SK-MEL-5 (cell line): ENCODE measurements at regions of chr2 and their contacts with region 1.

Region 1: DNA sequence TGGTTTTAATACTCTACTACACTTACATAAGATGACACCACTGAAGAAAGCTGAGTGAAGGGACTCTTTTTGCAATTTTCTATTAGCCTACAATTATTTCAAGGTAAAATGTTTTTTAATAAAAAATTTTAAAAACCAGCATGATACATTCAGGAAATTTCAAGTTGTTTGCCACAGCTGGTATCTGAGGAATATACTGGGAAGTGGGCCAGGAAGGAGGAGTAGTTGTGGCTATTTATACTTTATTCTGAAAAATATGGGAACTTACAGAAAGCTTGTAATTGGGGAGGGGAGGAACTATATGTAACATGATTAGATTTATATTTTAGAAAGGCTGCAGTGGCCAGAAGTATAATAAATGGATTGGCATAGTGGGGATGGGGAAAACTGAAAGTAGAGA is 40.8 kb downstream of the WDR35 start:
- DNase-seq: no peak

Region 2: DNA sequence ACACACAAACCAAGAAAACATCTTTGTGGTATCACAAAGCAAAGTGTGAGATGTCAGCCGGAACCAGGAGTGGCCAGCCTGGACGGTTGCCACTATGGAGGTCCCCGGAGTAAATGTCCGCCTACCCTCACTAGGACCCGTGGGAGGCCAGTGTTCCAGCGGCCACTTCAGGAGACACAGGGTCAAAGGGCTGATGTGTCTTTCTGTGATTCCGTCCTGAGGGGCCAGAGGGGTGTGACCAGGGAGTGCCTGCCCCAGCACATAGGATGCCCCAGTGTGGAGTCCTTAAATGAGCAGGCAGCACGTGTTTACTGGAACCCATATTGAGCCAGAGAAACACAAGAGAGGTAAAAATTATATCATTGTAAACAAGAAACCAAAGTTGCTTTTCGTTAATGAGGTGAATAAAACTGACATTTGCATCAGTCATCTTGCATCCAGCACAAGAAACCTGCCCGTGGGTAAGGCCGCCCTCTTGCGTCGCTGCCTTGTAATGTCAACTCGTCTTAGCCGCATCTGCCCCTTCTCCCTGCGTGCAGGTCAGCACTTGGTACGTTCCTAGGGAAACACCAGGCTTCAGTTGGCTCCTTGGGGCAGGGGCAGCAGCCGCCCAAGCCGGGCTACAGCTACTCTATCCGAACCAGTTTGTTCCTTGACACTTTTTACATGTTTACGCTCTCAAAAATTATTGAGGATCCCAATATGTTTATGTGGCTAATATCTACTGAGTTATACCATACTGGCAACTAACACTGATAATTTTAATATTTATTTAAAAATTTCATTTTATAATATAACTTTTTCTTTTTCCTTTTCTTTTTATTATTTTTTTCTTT is 149.0 kb after region 1 on chr2:
- in situ Hi-C with region 1: loop called (anchors 10 kb)
- DNase-seq: peak; percentile 93